Activated CD4-positive, alpha-beta memory T cell treated with anti-CD3 and anti-CD28 coated beads for 36 hours (primary cell): ENCODE measurements at regions of chr2 and their contacts with region 1.

Region 1: GRCh38 chr2:9087121-9087681 is 83.7 kb upstream of the MBOAT2 start:
- DNase-seq: no peak
- H3K4me3 Mint-ChIP-seq: no peak overlapping the region
- H3K27ac Mint-ChIP-seq: no peak overlapping the region
- H3K4me1 Mint-ChIP-seq: no peaks in the 10 kb centered on the region
- H3K27me3 Mint-ChIP-seq: peaks cover 1% of the 10 kb centered on the region

Region 2: GRCh38 chr2:9071584-9072124 is 15.5 kb before region 1 on chr2:
- CTCF ChIA-PET with region 1: no interaction called
- POLR2A ChIA-PET with region 1: no interaction called
- intact Hi-C with region 1: loop called (anchors 1 kb)
- DNase-seq: no peak
- H3K4me3 Mint-ChIP-seq: no peak overlapping the region
- H3K27ac Mint-ChIP-seq: no peak overlapping the region
- H3K4me1 Mint-ChIP-seq: no peaks in the 10 kb centered on the region
- H3K27me3 Mint-ChIP-seq: peaks cover 17% of the 10 kb centered on the region

Region 3: DNA sequence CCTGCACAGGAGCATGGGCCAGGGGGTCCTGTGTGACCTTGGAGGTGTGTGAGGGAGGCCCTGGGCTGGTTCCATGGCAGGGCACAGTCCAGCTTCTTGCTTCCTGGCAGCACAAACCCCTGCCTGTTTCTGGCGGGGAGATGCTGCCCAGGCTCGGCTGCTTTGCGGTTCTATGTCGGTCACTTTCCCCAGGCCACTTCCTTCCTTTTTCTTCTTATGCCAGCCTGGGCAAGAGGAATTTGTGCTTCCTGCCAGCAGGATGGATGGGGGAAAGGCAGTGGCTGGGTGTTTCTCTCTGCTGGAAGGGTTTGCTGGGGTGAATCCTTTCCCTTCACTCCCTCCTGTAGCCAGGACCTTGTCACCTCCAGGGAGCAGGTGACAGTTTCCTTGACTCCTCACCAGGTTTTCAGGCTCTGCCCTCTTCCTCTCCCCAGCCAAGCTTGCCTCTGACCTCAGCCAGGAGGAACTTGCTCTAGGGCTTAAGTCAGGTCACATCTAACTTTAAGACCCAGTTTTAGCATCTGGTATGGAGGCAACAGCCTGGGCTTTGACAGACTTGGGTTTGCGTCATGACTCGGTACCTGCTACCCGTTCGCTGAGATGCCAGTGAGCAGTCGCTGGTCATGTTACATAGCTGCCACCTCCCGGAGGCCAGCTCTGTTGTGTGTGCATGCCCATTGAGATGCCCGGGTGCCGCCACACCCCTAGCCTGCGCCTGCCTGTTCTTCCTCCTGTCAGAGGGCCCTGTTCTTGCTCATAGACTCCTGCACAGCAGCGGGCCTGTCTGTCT is 143.9 kb after region 1 on chr2:
- CTCF ChIA-PET with region 1: no interaction called
- POLR2A ChIA-PET with region 1: no interaction called
- intact Hi-C with region 1: no loop called
- DNase-seq: no peak
- H3K4me3 Mint-ChIP-seq: no peak overlapping the region
- H3K27ac Mint-ChIP-seq: no peak overlapping the region
- H3K4me1 Mint-ChIP-seq: no peaks in the 10 kb centered on the region
- H3K27me3 Mint-ChIP-seq: peaks cover 33% of the 10 kb centered on the region

Region 4: DNA sequence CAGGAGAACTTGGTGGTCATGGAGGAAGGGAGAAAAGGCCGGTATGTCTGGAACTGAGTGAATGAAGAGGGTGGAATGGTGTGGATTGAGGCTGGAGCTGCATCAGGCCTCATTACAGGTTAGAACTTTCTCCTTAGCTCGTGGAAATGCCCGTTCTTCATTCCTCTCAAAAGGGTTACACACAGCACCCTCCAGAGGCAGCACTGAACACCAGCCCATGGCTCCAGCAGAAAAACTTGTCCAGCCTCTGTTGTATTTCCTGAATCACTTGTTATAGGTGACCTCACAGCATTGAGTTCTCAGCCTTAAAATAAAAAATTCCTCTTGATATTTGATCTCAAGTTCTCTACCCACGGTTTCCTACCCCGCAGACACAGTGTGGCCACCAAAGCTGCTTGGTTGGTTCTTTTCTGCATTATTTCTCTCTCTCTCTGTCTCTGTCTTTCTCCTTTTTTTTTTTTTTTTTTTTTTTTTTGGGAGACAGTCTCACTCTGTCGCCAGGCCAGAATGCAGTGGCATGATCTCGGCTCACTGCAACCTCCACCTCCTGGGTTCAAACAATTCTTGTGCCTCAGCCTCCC is 246.5 kb after region 1 on chr2:
- CTCF ChIA-PET with region 1: no interaction called
- POLR2A ChIA-PET with region 1: no interaction called
- intact Hi-C with region 1: no loop called
- DNase-seq: peak; percentile 34
- H3K4me3 Mint-ChIP-seq: no peak overlapping the region
- H3K27ac Mint-ChIP-seq: no peak overlapping the region
- H3K4me1 Mint-ChIP-seq: peaks cover 3% of the 10 kb centered on the region
- H3K27me3 Mint-ChIP-seq: peaks cover 2% of the 10 kb centered on the region